IMR-90 (cell line): ENCODE measurements at regions of chr5 and their contacts with region 1.

Region 1: GRCh38 chr5:96934708-96935558 is 947 bp upstream of the LNPEP start:
- DNase-seq: peak; percentile 92
- ATAC-seq: peak; percentile 79
- H3K4me3 ChIP-seq: peak overlapping the region; percentile 68
- H3K27ac ChIP-seq: peak overlapping the region; percentile 92
- H3K4me1 ChIP-seq: no peaks in the 10 kb centered on the region; the same call in 1 of the 2 replicates
- H3K27me3 ChIP-seq: no peaks in the 10 kb centered on the region
- CTCF ChIP-seq: no peak
- POLR2A ChIP-seq: no peak
- RAD21 ChIP-seq: no peak

Region 2: DNA sequence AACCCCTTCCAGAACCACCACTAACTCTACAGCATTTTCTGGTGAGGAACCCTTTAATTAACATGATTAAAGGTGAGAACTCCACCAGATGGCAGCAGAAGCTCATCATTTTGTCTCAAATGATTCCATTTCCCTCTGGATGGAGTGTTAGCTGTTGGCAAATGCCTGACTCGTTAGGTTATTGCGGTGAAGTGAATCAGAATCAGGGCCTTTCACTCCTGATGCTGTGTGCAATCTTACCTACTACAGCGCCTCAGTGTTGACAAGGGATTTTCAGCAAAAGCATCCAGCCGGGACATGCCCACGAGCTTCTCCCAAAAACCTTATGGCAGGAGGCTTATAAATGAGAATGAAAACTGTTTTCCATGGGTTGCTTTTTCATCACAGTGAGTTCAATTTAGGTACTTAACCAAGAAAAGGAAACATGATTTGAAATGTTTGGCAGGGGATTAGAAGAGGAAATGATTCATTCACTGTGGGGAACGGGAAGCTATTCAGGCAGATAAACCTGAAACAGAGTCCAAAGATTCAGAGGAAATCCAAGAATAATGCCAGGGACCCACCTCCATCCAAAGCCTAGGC is 320.7 kb before region 1 on chr5:
- CTCF ChIA-PET with region 1: no interaction called
- POLR2A ChIA-PET with region 1: no interaction called
- dilution Hi-C with region 1: no loop called
- in situ Hi-C with region 1: no loop called
- intact Hi-C with region 1: loop called (anchors 5 kb)
- DNase-seq: peak; percentile 96
- ATAC-seq: peak; percentile 94
- H3K4me3 ChIP-seq: peak overlapping the region; percentile 1; the same call in 1 of the 2 replicates
- H3K27ac ChIP-seq: peak overlapping the region; percentile 44
- H3K4me1 ChIP-seq: no peaks in the 10 kb centered on the region; the same call in 1 of the 2 replicates
- H3K27me3 ChIP-seq: no peaks in the 10 kb centered on the region
- CTCF ChIP-seq: peak; percentile 71
- POLR2A ChIP-seq: no peak
- RAD21 ChIP-seq: peak; percentile 91

Region 3: GRCh38 chr5:96771395-96771794 is 163.5 kb before region 1 on chr5:
- CTCF ChIA-PET with region 1: no interaction called
- POLR2A ChIA-PET with region 1: interaction called, 6 read pairs
- dilution Hi-C with region 1: no loop called
- in situ Hi-C with region 1: no loop called
- intact Hi-C with region 1: loop called (anchors 5 kb)
- DNase-seq: no peak
- ATAC-seq: no peak
- H3K4me3 ChIP-seq: no peak overlapping the region
- H3K27ac ChIP-seq: no peak overlapping the region
- H3K4me1 ChIP-seq: no peaks in the 10 kb centered on the region
- H3K27me3 ChIP-seq: no peaks in the 10 kb centered on the region
- CTCF ChIP-seq: no peak
- POLR2A ChIP-seq: no peak
- RAD21 ChIP-seq: no peak

Region 4: DNA sequence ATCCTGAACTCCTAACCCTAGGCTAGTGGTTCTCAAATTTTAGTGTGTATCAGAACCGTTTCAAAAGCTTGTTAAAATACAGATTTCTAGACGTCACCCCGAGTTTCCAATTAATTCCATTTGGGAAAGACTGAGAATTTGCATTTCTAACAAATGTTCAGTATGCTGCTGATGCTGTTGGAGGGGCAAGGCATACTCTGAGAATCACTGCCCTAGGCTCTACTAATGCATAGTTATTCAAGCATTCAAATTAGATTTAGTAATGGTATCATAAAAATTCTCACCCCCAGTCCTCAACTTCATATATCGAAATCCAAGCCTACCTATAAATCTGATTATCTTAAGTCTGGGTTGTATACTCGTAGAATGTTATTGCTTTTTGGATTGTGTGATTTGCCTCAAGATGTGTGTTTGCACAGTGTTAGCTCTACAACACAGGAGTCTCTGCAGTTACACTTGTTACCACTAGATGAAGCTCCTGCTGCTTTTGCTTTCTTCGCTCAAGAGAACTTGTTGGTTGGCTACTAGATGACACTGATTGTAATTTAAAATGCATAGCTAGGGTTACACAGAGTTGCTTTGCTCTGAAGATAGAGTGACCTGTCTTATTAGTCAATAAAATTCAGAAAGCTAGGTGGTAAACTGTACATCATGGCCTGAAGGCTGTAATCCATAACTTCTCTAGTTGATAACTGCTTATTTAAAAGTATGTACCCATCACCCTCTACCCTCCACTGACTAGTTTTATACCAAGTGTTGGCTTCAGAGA is 66.1 kb before region 1 on chr5:
- CTCF ChIA-PET with region 1: no interaction called
- POLR2A ChIA-PET with region 1: no interaction called
- dilution Hi-C with region 1: no loop called
- in situ Hi-C with region 1: no loop called
- intact Hi-C with region 1: loop called (anchors 2 kb)
- DNase-seq: peak; percentile 82
- ATAC-seq: peak; percentile 99
- H3K4me3 ChIP-seq: no peak overlapping the region
- H3K27ac ChIP-seq: no peak overlapping the region
- H3K4me1 ChIP-seq: no peaks in the 10 kb centered on the region
- H3K27me3 ChIP-seq: no peaks in the 10 kb centered on the region
- CTCF ChIP-seq: peak; percentile 97
- POLR2A ChIP-seq: no peak
- RAD21 ChIP-seq: peak; percentile 95

Region 5: GRCh38 chr5:97142521-97143254 is 207.8 kb after region 1 on chr5 and contains the start of gene LIX1:
- CTCF ChIA-PET with region 1: no interaction called
- POLR2A ChIA-PET with region 1: no interaction called
- dilution Hi-C with region 1: no loop called
- in situ Hi-C with region 1: no loop called
- intact Hi-C with region 1: loop called (anchors 5 kb)
- DNase-seq: peak; percentile 36
- ATAC-seq: peak; percentile 94
- H3K4me3 ChIP-seq: no peak within 1 kb of the TSS
- H3K27ac ChIP-seq: no peak within 1 kb of the TSS
- H3K4me1 ChIP-seq: no peaks in the 10 kb centered on the region
- H3K27me3 ChIP-seq: peaks cover 23% of the 10 kb centered on the region
- CTCF ChIP-seq: peak; percentile 61
- POLR2A ChIP-seq: no peak
- RAD21 ChIP-seq: peak; percentile 68
- total RNA-seq, gene LIX1: not detected in 2 replicates